ENCODE measurements at regions of chr7 and their contacts with region 1.

Region 1: DNA sequence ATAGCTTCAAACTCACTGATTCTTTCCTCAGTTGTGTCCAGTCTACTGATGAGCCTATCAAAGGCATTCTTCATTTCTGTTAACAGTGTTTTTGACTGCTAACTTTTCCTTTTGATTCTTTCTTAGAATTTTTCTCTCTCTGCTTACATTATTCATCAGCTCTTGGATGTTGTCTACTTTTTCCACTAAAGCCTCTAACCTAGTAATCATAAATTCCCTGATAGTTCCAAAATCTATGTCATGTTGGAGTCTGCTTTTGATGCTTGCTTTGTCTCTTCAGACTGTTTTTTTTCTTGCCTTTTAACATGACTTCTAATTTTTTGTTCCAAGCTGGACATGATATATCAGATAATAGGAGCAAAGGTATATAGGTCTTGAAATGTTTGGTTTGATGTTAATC is 78.0 kb downstream of the ADAM22 start:
- DNase-seq: no peak
- ATAC-seq: no peak
- H3K4me3 ChIP-seq: no peak overlapping the region
- H3K27ac ChIP-seq: no peak overlapping the region
- H3K4me1 ChIP-seq: no peaks in the 10 kb centered on the region
- H3K27me3 ChIP-seq: no peaks in the 10 kb centered on the region
- CTCF ChIP-seq: no peak
- EP300 ChIP-seq: no peak
- POLR2A ChIP-seq: no peak
- RAD21 ChIP-seq: no peak

Region 2: DNA sequence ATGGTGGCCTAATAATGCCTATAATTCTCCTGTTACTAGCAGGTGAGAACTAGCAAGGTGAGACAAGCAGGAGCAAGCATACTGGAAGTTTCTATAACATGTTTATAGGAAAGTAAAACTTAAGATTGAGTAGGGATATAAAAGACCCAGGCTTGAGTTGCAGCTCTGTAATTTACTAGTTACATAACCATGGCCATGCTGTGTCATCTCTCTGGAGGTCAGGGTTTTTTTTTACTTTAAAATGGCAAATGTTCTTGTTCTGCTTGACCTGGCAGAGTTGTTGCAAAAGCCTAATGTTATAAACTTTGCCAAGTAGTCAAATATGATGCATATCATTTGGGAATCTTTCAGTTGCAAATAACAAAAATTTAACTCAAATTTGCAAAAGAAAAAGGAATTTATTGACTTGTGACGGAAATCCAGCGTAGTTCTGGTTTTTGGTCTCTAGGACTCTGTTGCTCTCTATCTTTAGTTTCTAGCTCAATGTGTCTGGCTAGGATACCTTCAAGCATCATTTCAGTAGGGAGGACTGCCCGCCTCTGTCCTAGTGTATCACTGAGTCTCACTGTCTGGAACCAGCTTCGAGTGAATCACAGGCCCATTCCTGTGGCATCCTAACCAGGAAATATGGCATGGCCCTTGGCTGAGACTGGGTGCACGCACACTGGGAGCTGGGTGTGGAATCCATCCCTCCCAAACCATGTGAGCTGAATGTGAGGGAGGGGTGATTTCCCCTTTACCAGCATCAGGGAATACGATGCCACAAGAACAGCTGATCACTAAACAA is 10.1 kb before region 1 on chr7:
- CTCF ChIA-PET with region 1: interaction called, 7 read pairs
- POLR2A ChIA-PET with region 1: no interaction called
- RAD21 ChIA-PET with region 1: no interaction called
- SMC1A ChIA-PET with region 1: interaction called, 12 read pairs
- in situ Hi-C with region 1: no loop called
- intact Hi-C with region 1: no loop called
- DNase-seq: no peak
- ATAC-seq: 0 out of 3 replicates have a peak, but pooled peaks have one; percentile 21
- H3K4me3 ChIP-seq: no peak overlapping the region
- H3K27ac ChIP-seq: no peak overlapping the region
- H3K4me1 ChIP-seq: no peaks in the 10 kb centered on the region
- H3K27me3 ChIP-seq: no peaks in the 10 kb centered on the region
- CTCF ChIP-seq: no peak
- EP300 ChIP-seq: no peak
- POLR2A ChIP-seq: no peak
- RAD21 ChIP-seq: no peak

Measured in GM12878 (cell line).